ENCODE measurements at regions of chr9 and their contacts with region 1.

Region 1: GRCh38 chr9:126301985-126302603 is 24.5 kb upstream of the MVB12B start:
- DNase-seq: peak in 4 of 5 donors; percentile 49 to 60 (median 57)
- ATAC-seq: peak in 3 of 4 donors; percentile 86
- H3K4me3 ChIP-seq: no peak overlapping the region
- H3K27ac ChIP-seq: no peak overlapping the region
- H3K4me1 ChIP-seq: no peaks in the 10 kb centered on the region
- H3K27me3 ChIP-seq: no peaks in the 10 kb centered on the region
- CTCF ChIP-seq: peak; percentile 64 to 84 (median 74)
- POLR2A ChIP-seq: no peak

Region 2: GRCh38 chr9:126398403-126399058 is 96.4 kb after region 1 on chr9:
- intact Hi-C with region 1: loop called (anchors 1 to 5 kb)
- DNase-seq: peak; percentile 70 to 91 (median 83)
- ATAC-seq: peak; percentile 79 to 92 (median 88)
- H3K4me3 ChIP-seq: no peak overlapping the region
- H3K27ac ChIP-seq: no peak overlapping the region
- H3K4me1 ChIP-seq: peaks cover 0 to 24% (median 4%) of the 10 kb centered on the region in 12 donors
- H3K27me3 ChIP-seq: no peaks in the 10 kb centered on the region
- CTCF ChIP-seq: peak in 11 of 12 donors; percentile 95 to 99 (median 97)
- POLR2A ChIP-seq: no peak

Region 3: DNA sequence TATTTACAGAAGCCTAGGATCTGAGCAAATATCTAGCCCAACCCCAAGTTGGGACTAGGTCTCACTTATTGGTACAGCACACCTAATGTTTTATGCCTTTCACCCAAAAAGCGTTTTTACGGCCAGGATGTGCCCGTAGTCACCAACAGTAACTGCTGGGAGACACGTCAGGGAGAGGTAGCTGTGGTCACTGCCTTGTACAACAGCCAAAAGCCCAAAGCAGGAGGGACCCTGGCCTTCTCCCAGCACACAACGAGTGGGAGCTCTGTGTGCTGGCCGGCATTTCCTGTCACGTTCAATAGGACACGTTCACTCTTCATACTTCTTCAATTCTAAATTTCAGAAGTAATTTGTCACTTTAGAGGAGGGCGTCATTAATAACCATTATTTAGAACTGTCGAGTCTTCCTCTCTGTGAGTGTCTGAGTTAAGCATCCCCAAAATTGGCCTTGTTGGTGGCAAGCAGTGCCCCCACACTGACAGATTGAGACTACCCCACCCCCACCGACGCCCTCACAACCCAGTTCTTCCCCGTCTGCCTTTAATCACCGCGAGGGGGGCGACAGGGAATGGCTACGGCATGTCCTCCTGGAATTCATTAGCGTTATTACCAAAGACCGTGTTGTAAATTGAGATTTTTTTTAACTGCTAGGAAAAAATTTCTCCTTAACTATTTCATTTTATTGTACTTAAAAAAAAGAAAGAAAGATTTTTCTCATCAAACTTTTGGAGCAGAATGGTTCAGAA is 105.2 kb after region 1 on chr9:
- intact Hi-C with region 1: loop called in 1 of 10 experiments (anchors 2 kb)
- DNase-seq: no peak
- ATAC-seq: peak in 2 of 4 donors; percentile 52 to 54
- H3K4me3 ChIP-seq: no peak overlapping the region
- H3K27ac ChIP-seq: no peak overlapping the region
- H3K4me1 ChIP-seq: peaks cover 0 to 18% (median 9%) of the 10 kb centered on the region in 12 donors
- H3K27me3 ChIP-seq: no peaks in the 10 kb centered on the region
- CTCF ChIP-seq: no peak
- POLR2A ChIP-seq: no peak